ENCODE measurements at regions of chr17 and their contacts with region 1.

Region 1: GRCh38 chr17:1122533-1123392 is 57.0 kb downstream of the ABR start:
- DNase-seq: peak in 9 of 10 donors; percentile 55 to 85 (median 72)
- H3K4me3 ChIP-seq: peak overlapping the region in 50 of 59 donors; percentile 1 to 63 (median 40)
- H3K27ac ChIP-seq: peak overlapping the region in 56 of 59 donors; percentile 7 to 88 (median 72)
- H3K27me3 ChIP-seq: peaks cover 0 to 22% (median 0%) of the 10 kb centered on the region in 45 donors
- CTCF ChIP-seq: peak; percentile 62 to 94 (median 87)

Region 2: GRCh38 chr17:1186923-1187771 is 64.4 kb after region 1 on chr17:
- intact Hi-C with region 1: loop called (anchors 1 to 2 kb)
- DNase-seq: peak; percentile 62 to 91 (median 76)
- H3K4me3 ChIP-seq: peak overlapping the region in 56 of 59 donors; percentile 4 to 61 (median 40)
- H3K27ac ChIP-seq: peak overlapping the region in 56 of 59 donors; percentile 7 to 88 (median 70)
- H3K27me3 ChIP-seq: peaks cover 0 to 23% (median 0%) of the 10 kb centered on the region in 45 donors
- CTCF ChIP-seq: peak; percentile 82 to 99 (median 95)

Measured in dorsolateral prefrontal cortex (tissue), 120 donors.